CD8-positive, alpha-beta memory T cell (primary cell): ENCODE measurements at regions of chr1 and their contacts with region 1.

Region 1: GRCh38 chr1:116139592-116140134 is 28.5 kb downstream of the MAB21L3 start:
- DNase-seq: no peak
- H3K4me3 ChIP-seq: no peak overlapping the region
- H3K4me3 Mint-ChIP-seq: no peak overlapping the region
- H3K27ac ChIP-seq: no peak overlapping the region
- H3K27ac Mint-ChIP-seq: peak overlapping the region in 1 of 8 donors; percentile 32
- H3K4me1 ChIP-seq: no peaks in the 10 kb centered on the region
- H3K4me1 Mint-ChIP-seq: peaks cover 5 to 7% (median 5%) of the 10 kb centered on the region in 3 donors
- H3K27me3 ChIP-seq: no peaks in the 10 kb centered on the region
- H3K27me3 Mint-ChIP-seq: peaks cover 13 to 19% of the 10 kb centered on the region in 2 donors

Region 2: GRCh38 chr1:116151739-116152576 is 12.3 kb after region 1 on chr1:
- CTCF ChIA-PET with region 1: interaction called, 28 read pairs
- POLR2A ChIA-PET with region 1: no interaction called
- DNase-seq: peak; percentile 68 to 79 (median 76)
- H3K4me3 ChIP-seq: peak overlapping the region; percentile 50
- H3K4me3 Mint-ChIP-seq: peak overlapping the region in 6 of 7 donors; percentile 64 to 78 (median 72)
- H3K27ac ChIP-seq: no peak overlapping the region
- H3K27ac Mint-ChIP-seq: peak overlapping the region; percentile 47 to 90 (median 79)
- H3K4me1 ChIP-seq: peaks cover 18% of the 10 kb centered on the region
- H3K4me1 Mint-ChIP-seq: peaks cover 10 to 18% (median 14%) of the 10 kb centered on the region in 3 donors
- H3K27me3 ChIP-seq: no peaks in the 10 kb centered on the region
- H3K27me3 Mint-ChIP-seq: peaks cover 0 to 4% of the 10 kb centered on the region in 2 donors

Region 3: DNA sequence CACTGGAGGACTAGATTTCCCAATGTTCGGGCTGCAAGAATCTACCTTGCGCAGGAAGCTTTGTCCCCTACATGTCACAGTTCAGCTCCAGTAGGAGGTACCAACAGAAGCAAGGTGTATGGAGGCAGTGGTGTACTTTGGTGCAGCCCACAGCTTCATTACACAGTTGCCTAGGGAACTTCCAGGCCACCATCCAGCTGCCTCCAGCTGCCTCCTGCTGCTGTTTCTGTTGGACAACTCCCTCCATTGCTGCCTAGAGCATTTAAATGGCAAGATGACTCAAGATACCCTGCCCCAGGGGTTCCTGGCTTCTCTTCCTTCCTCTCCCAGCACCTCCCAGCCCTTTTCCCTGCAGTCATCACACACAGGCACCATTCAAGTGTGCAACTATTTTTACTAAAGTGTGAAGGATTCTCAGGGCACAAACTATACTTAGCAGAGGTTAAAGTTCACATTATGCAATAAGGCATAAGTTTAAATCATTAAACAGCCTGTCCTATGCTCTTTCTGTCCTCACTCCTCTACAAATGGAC is 194.4 kb after region 1 on chr1:
- CTCF ChIA-PET with region 1: interaction called, 12 read pairs
- POLR2A ChIA-PET with region 1: no interaction called
- DNase-seq: no peak
- H3K4me3 ChIP-seq: no peak overlapping the region
- H3K4me3 Mint-ChIP-seq: no peak overlapping the region
- H3K27ac ChIP-seq: no peak overlapping the region
- H3K27ac Mint-ChIP-seq: peak overlapping the region in 1 of 8 donors; percentile 27
- H3K4me1 ChIP-seq: peaks cover 11% of the 10 kb centered on the region
- H3K4me1 Mint-ChIP-seq: peaks cover 2 to 16% (median 8%) of the 10 kb centered on the region in 3 donors
- H3K27me3 ChIP-seq: no peaks in the 10 kb centered on the region
- H3K27me3 Mint-ChIP-seq: peaks cover 0 to 4% of the 10 kb centered on the region in 2 donors

Region 4: DNA sequence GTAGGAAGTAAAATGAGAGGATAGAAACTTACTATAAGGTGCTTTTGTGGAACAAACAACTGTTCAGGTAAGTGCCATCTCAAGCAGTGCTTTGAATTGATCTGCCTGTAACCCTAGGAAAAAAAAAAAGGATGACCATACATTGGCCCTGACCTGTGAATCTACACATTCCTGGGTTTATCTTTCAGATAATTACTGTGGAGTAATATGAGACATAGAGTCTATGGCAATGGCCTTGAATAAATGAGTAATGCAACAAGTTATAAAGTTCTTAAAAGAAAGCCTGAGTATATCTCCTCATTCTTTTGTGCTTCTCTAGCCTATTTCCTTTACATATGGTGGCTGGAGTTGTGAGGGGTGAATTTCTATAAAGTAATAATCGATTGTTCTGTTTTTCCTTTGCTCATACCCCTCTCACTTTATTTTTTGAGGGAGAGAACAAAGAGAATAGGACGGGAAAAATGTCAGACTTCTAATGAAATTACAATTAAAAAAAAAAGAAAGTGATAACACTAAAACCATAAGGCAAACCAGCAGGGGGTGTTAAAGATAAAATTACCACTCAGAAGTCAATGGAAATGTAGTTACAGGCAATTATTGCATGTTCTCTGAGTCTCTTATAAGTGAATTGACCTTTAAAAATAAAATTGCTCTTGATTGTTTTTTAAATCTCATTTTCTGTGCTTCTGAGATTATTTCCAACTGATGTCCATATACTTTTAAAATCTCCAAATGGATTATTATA is 220.9 kb after region 1 on chr1:
- CTCF ChIA-PET with region 1: interaction called, 10 read pairs
- POLR2A ChIA-PET with region 1: no interaction called
- DNase-seq: peak in 2 of 5 donors; percentile 18 to 39
- H3K4me3 ChIP-seq: no peak overlapping the region
- H3K4me3 Mint-ChIP-seq: no peak overlapping the region
- H3K27ac ChIP-seq: no peak overlapping the region
- H3K27ac Mint-ChIP-seq: no peak overlapping the region
- H3K4me1 ChIP-seq: peaks cover 4% of the 10 kb centered on the region
- H3K4me1 Mint-ChIP-seq: peaks cover 8 to 12% (median 8%) of the 10 kb centered on the region in 3 donors
- H3K27me3 ChIP-seq: no peaks in the 10 kb centered on the region
- H3K27me3 Mint-ChIP-seq: peaks cover 0 to 4% of the 10 kb centered on the region in 2 donors

Region 5: DNA sequence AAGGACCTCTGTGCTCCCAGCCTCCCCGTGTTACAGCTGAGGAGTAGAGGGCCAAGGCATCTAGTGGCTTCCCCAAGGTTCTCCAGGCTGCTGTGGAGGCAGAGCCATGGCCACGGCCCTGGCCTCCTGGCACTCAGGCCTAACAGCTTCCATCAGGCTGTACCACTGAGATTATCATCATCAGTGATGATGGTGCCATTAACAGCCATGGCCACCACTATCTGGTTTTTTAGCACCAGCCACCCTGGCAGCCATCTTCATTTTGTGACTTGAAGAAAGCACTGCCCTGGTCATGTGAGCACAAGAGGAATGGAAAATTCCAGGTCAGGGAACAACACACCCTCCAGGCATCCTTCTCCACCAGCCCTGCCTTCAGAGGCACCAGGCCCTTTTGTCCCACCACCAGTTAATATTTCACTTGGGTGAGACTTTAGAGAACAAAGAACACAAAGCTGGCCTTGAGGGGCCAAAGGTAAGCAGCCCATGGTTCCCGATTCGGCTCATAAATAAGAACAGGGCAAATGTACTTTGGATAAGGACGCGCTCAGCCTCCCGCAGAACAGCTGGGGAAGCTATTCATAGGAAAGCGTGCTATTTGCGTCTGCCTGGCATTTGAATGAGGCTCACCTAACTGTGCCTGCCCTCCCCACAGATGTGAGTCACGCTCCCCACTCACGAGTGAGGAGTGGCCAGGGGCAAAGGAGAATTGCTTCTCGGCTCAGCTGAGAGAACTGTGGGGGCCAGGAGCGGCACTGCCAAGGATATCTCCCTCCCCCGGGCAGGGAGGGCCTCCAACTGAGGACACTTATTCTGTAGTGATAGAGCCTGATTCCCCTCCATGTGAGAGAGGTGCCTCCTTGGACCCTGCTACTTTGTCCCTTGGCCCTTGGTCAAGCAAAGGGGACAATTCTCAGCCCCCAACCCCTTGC is 335.5 kb after region 1 on chr1:
- CTCF ChIA-PET with region 1: interaction called, 10 read pairs
- POLR2A ChIA-PET with region 1: no interaction called
- DNase-seq: no peak
- H3K4me3 ChIP-seq: no peak overlapping the region
- H3K4me3 Mint-ChIP-seq: no peak overlapping the region
- H3K27ac ChIP-seq: no peak overlapping the region
- H3K27ac Mint-ChIP-seq: no peak overlapping the region
- H3K4me1 ChIP-seq: no peaks in the 10 kb centered on the region
- H3K4me1 Mint-ChIP-seq: peaks cover 6 to 12% (median 7%) of the 10 kb centered on the region in 3 donors
- H3K27me3 ChIP-seq: no peaks in the 10 kb centered on the region
- H3K27me3 Mint-ChIP-seq: peaks cover 0 to 5% of the 10 kb centered on the region in 2 donors

Region 6: GRCh38 chr1:116498789-116499628 is 359.3 kb after region 1 on chr1:
- CTCF ChIA-PET with region 1: interaction called, 82 read pairs
- POLR2A ChIA-PET with region 1: interaction called, 4 read pairs
- DNase-seq: peak in 4 of 5 donors; percentile 24 to 59 (median 44)
- H3K4me3 ChIP-seq: no peak overlapping the region
- H3K4me3 Mint-ChIP-seq: no peak overlapping the region
- H3K27ac ChIP-seq: no peak overlapping the region
- H3K27ac Mint-ChIP-seq: peak overlapping the region in 6 of 8 donors; percentile 32 to 94 (median 84)
- H3K4me1 ChIP-seq: peaks cover 28% of the 10 kb centered on the region
- H3K4me1 Mint-ChIP-seq: peaks cover 28 to 36% (median 30%) of the 10 kb centered on the region in 3 donors
- H3K27me3 ChIP-seq: no peaks in the 10 kb centered on the region
- H3K27me3 Mint-ChIP-seq: peaks cover 0 to 4% of the 10 kb centered on the region in 2 donors